OCI-LY7 (cell line): ENCODE measurements at regions of chr2 and their contacts with region 1.

Region 1: GRCh38 chr2:104109356-104109755 is 744.6 kb upstream of the POU3F3 start:
- DNase-seq: peak; percentile 72
- H3K4me3 ChIP-seq: peak overlapping the region; percentile 7
- H3K27ac ChIP-seq: peak overlapping the region; percentile 65
- H3K4me1 ChIP-seq: peaks cover 39% of the 10 kb centered on the region
- CTCF ChIP-seq: no peak

Region 2: GRCh38 chr2:104092886-104093285 is 16.5 kb before region 1 on chr2:
- CTCF ChIA-PET with region 1: no interaction called
- POLR2A ChIA-PET with region 1: interaction called, 14 read pairs
- intact Hi-C with region 1: no loop called
- DNase-seq: no peak
- H3K4me3 ChIP-seq: no peak overlapping the region
- H3K27ac ChIP-seq: no peak overlapping the region
- H3K4me1 ChIP-seq: no peaks in the 10 kb centered on the region
- CTCF ChIP-seq: no peak